Dendritic cell treated with granulocyte-macrophage colony-stimulating factor and Interleukin-4, amounts not matched to agents 40 ng/mL and 50 ng/mL, for 4 days (primary cell): ENCODE measurements at regions of chr2 and their contacts with region 1.

Region 1: GRCh38 chr2:160252278-160252887 is 52.3 kb upstream of the ITGB6 start:
- H3K4me3 Mint-ChIP-seq: no peak overlapping the region
- H3K27ac Mint-ChIP-seq: peak overlapping the region; percentile 41
- H3K4me1 Mint-ChIP-seq: peaks cover 10% of the 10 kb centered on the region
- H3K27me3 Mint-ChIP-seq: no peaks in the 10 kb centered on the region

Region 2: DNA sequence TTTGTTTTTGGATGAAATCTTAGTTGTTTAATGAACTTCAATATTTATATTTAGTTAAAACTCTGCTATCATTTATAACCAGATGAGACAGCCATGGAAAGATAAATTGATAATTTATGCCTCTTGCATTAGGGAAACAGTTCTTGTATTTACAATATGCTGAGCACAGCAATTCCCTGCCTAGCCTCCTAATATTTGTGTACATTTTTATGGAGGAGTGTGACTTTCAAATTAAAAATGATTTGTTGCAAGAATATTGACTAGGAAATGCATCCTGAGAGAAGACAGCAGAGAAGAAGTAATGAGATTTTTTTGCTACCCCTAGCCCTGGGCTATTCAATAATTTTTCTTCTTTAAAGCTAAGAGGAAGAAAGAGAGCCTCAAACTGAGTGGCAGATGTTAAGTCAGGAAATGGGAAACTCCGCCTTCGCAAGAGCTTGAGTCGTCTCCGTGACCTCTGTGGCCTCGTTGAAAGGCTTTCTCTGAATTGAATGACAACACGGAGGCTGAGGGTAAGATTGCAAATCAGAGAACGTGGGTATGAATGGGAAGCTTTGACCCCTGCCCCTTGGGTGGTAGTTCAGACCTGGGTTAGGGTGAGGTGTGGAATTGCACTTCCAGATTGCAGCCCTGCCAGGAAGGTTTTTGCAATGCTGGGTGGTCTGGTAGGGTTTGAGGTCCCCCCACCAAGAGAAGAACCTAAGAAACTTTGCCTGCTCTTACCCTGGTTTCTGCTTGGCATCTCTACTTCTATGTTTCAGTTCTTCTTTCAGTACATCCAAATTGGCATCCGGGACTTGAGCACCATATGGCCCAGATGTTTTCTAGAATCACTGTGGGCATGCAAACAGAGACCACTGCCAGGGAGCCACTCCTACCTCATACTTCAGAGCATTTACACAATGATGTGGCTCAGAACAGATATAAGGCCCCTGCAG is 451.5 kb after region 1 on chr2:
- intact Hi-C with region 1: loop called (anchors 10 kb)
- H3K4me3 Mint-ChIP-seq: peak overlapping the region; percentile 62
- H3K27ac Mint-ChIP-seq: peak overlapping the region; percentile 90
- H3K4me1 Mint-ChIP-seq: peaks cover 28% of the 10 kb centered on the region
- H3K27me3 Mint-ChIP-seq: no peaks in the 10 kb centered on the region